ENCODE measurements at regions of chr15 and their contacts with region 1.

Region 1: GRCh38 chr15:32053719-32054118 is 23.4 kb downstream of the CHRNA7 start:
- DNase-seq: no peak
- ATAC-seq: no peak
- H3K4me3 Mint-ChIP-seq: no peak overlapping the region
- H3K27ac Mint-ChIP-seq: no peak overlapping the region
- H3K4me1 Mint-ChIP-seq: no peaks in the 10 kb centered on the region
- H3K27me3 Mint-ChIP-seq: peaks cover 11% of the 10 kb centered on the region

Region 2: DNA sequence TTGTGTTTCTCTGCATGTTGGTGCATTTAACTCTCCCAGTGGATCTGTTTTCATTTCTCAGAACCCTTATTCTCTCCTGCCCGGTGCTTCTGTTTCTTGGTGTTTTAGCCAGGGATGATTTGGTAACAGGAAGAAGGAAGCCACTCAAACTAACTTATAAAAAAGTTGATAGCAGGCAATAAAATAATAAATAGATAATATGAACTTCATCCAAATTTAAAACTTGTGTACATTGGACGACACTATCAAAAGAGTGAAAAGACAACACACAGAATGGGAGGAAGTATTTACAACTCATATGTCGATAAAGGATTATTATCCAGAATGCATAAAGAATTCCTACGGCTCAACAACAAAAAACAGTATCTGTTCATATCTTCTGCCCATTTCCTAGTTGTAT is 60.7 kb before region 1 on chr15:
- CTCF ChIA-PET with region 1: no interaction called
- POLR2A ChIA-PET with region 1: no interaction called
- intact Hi-C with region 1: loop called in 1 of 2 experiments (anchors 10 kb)
- DNase-seq: no peak
- ATAC-seq: no peak
- H3K4me3 Mint-ChIP-seq: no peak overlapping the region
- H3K27ac Mint-ChIP-seq: no peak overlapping the region
- H3K4me1 Mint-ChIP-seq: no peaks in the 10 kb centered on the region
- H3K27me3 Mint-ChIP-seq: peaks cover 10% of the 10 kb centered on the region

Region 3: DNA sequence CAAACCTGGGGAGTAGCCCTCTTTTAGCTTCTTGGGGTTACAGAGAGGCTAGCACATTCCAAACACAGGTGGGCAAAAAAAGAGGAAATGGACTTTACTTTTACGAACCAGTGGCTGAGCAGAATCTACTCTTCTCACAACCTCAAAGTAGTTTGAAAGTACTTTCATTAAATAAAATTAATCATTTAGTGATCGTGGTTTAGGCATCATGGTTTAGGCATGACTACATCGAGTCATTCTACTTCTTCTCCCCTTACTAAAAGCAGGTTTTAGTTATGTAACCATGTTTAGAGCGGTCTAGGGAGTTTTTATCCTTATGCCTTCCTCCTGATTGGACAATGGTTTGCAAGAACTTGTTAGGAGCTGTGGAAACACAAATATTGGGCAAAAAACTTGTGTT is 661.6 kb after region 1 on chr15:
- CTCF ChIA-PET with region 1: no interaction called
- POLR2A ChIA-PET with region 1: no interaction called
- intact Hi-C with region 1: no loop called
- DNase-seq: no peak
- ATAC-seq: no peak
- H3K4me3 Mint-ChIP-seq: no peak overlapping the region
- H3K27ac Mint-ChIP-seq: no peak overlapping the region
- H3K4me1 Mint-ChIP-seq: peaks cover 11% of the 10 kb centered on the region
- H3K27me3 Mint-ChIP-seq: peaks cover 58% of the 10 kb centered on the region